ENCODE measurements at regions of chr12 and their contacts with region 1.

Region 1: GRCh38 chr12:75480469-75480949 is at the start of gene GLIPR1:
- DNase-seq: peak; percentile 99
- ATAC-seq: peak; percentile 91
- H3K4me3 ChIP-seq: peak within 1 kb of the TSS; percentile 66
- H3K27ac ChIP-seq: peak within 1 kb of the TSS; percentile 94
- H3K4me1 ChIP-seq: peaks cover 15% of the 10 kb centered on the region
- H3K27me3 ChIP-seq: no peaks in the 10 kb centered on the region
- CTCF ChIP-seq: no peak
- POLR2A ChIP-seq: peak; percentile 98
- RAD21 ChIP-seq: peak; percentile 24; the same call in 1 of the 2 replicates
- total RNA-seq, gene GLIPR1: 244 and 327 TPM in 2 replicates

Region 2: GRCh38 chr12:74537707-74538385 is 942.7 kb before region 1 on chr12 and contains the start of gene ATXN7L3B:
- CTCF ChIA-PET with region 1: no interaction called
- POLR2A ChIA-PET with region 1: no interaction called
- dilution Hi-C with region 1: no loop called
- in situ Hi-C with region 1: no loop called
- intact Hi-C with region 1: loop called (anchors 10 kb)
- DNase-seq: peak; percentile 93
- ATAC-seq: peak; percentile 99
- H3K4me3 ChIP-seq: peak within 1 kb of the TSS; percentile 80
- H3K27ac ChIP-seq: peak within 1 kb of the TSS; percentile 82
- H3K4me1 ChIP-seq: peaks cover 12% of the 10 kb centered on the region
- H3K27me3 ChIP-seq: no peaks in the 10 kb centered on the region
- CTCF ChIP-seq: no peak
- POLR2A ChIP-seq: peak; percentile 92
- RAD21 ChIP-seq: no peak
- total RNA-seq, gene ATXN7L3B: 21.7 and 28.1 TPM in 2 replicates

Region 3: GRCh38 chr12:74801625-74802024 is 678.9 kb before region 1 on chr12:
- CTCF ChIA-PET with region 1: no interaction called
- POLR2A ChIA-PET with region 1: no interaction called
- dilution Hi-C with region 1: no loop called
- in situ Hi-C with region 1: no loop called
- intact Hi-C with region 1: loop called (anchors 5 kb)
- DNase-seq: no peak
- ATAC-seq: no peak
- H3K4me3 ChIP-seq: no peak overlapping the region
- H3K27ac ChIP-seq: no peak overlapping the region
- H3K4me1 ChIP-seq: no peaks in the 10 kb centered on the region
- H3K27me3 ChIP-seq: no peaks in the 10 kb centered on the region
- CTCF ChIP-seq: no peak
- POLR2A ChIP-seq: no peak
- RAD21 ChIP-seq: no peak

Region 4: DNA sequence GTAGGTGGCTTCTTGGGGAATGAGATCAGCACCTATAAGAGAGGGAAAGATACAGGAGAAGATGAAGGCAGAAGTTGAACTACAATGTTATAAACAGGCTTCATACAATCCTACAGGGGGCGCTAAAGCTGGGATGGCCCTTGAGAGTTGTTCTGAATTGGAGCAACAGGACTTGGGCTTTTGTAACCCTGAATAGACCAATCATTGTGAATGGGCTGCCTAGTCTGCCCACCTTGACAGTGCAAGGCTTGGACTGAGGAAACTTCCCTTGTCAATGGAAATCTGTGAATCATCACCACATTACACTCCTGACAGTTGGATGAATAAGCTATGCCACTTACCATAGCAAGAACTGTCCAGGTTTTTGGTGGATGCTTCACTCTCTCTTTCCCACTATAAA is 577.0 kb before region 1 on chr12:
- CTCF ChIA-PET with region 1: no interaction called
- POLR2A ChIA-PET with region 1: no interaction called
- dilution Hi-C with region 1: no loop called
- in situ Hi-C with region 1: no loop called
- intact Hi-C with region 1: no loop called
- DNase-seq: no peak
- ATAC-seq: no peak
- H3K4me3 ChIP-seq: no peak overlapping the region
- H3K27ac ChIP-seq: no peak overlapping the region
- H3K4me1 ChIP-seq: 0 out of 2 replicates have a peak, but pooled peaks cover 2% of the 10 kb centered on the region
- H3K27me3 ChIP-seq: no peaks in the 10 kb centered on the region
- CTCF ChIP-seq: 0 out of 2 replicates have a peak, but pooled peaks have one; percentile 8
- POLR2A ChIP-seq: no peak
- RAD21 ChIP-seq: no peak

Region 5: GRCh38 chr12:75177997-75178396 is 302.5 kb before region 1 on chr12:
- CTCF ChIA-PET with region 1: no interaction called
- POLR2A ChIA-PET with region 1: no interaction called
- dilution Hi-C with region 1: no loop called
- in situ Hi-C with region 1: no loop called
- intact Hi-C with region 1: loop called (anchors 10 kb)
- DNase-seq: peak; percentile 95
- ATAC-seq: peak; percentile 94
- H3K4me3 ChIP-seq: no peak overlapping the region
- H3K27ac ChIP-seq: peak overlapping the region; percentile 37; the same call in 1 of the 2 replicates
- H3K4me1 ChIP-seq: no peaks in the 10 kb centered on the region
- H3K27me3 ChIP-seq: peaks cover 3% of the 10 kb centered on the region
- CTCF ChIP-seq: no peak
- POLR2A ChIP-seq: no peak
- RAD21 ChIP-seq: no peak

Region 6: DNA sequence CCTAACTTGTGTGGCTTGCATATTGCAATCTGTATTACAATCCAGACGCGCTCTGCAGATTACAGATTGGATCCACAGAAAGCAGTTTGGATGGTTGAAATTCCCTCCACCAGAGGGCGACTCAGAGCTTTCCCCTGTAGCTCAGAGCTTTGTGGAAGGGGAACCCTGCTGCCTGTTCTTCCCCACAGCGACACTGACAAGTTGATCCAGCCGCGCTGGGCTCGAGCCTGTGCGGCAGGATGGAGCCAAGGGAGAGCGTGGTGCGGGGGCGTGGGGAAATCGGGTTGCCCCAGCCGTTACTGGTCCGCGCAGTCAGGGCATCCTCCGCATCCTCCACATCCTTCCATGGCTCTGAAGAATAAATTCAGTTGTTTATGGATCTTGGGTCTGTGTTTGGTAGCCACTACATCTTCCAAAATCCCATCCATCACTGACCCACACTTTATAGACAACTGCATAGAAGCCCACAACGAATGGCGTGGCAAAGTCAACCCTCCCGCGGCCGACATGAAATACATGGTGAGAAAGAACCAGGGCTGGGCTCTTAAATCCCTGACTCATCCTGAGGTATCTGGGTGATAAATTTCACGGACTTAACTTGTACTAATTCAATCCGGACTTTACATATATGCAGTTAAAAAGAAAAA is 146.0 kb before region 1 on chr12 and contains the start of gene GLIPR1L1:
- CTCF ChIA-PET with region 1: interaction called, 3 read pairs
- POLR2A ChIA-PET with region 1: no interaction called
- dilution Hi-C with region 1: no loop called
- in situ Hi-C with region 1: loop called (anchors 5 kb)
- intact Hi-C with region 1: loop called (anchors 1 kb)
- DNase-seq: peak; percentile 89
- ATAC-seq: peak; percentile 85
- H3K4me3 ChIP-seq: peak within 1 kb of the TSS; percentile 68
- H3K27ac ChIP-seq: peak within 1 kb of the TSS; percentile 53
- H3K4me1 ChIP-seq: no peaks in the 10 kb centered on the region
- H3K27me3 ChIP-seq: no peaks in the 10 kb centered on the region
- CTCF ChIP-seq: peak; percentile 85
- POLR2A ChIP-seq: no peak
- RAD21 ChIP-seq: peak; percentile 75
- total RNA-seq, gene GLIPR1L1: not detected in 2 replicates

Region 7: DNA sequence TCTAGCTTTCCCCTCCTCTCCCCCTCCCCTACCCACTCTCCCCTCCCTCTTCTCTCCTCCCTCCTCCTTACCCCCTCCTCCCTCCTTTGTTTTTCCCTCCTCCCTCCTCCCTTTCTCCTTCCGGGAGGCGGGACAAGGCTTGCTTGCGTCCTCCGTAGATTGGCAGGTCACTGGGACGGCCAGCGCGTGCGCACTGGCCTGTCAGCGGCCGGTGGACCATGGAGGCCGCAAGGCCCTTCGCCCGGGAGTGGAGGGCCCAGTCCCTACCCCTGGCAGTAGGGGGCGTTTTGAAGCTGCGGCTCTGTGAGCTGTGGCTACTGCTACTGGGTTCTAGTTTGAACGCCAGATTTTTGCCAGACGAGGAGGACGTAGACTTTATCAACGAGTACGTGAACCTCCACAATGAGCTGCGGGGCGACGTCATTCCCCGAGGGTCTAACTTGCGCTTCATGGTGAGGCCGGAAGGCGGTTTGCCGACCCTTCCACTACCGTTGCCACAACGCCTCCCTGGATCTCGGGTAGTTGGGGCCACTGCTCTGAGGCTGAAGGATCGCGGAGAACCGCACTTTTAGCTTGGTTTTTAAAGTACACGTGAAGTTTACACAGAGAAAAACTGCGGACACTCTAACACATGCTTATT is 89.5 kb before region 1 on chr12 and contains the start of gene GLIPR1L2:
- CTCF ChIA-PET with region 1: interaction called, 7 read pairs
- POLR2A ChIA-PET with region 1: interaction called, 3 read pairs
- dilution Hi-C with region 1: no loop called
- in situ Hi-C with region 1: loop called (anchors 10 kb)
- intact Hi-C with region 1: loop called (anchors 1 kb)
- DNase-seq: peak; percentile 97
- ATAC-seq: peak; percentile 99
- H3K4me3 ChIP-seq: peak within 1 kb of the TSS; percentile 51
- H3K27ac ChIP-seq: peak within 1 kb of the TSS; percentile 81
- H3K4me1 ChIP-seq: 0 out of 2 replicates have a peak, but pooled peaks cover 2% of the 10 kb centered on the region
- H3K27me3 ChIP-seq: no peaks in the 10 kb centered on the region
- CTCF ChIP-seq: peak; percentile 91
- POLR2A ChIP-seq: no peak
- RAD21 ChIP-seq: peak; percentile 66
- total RNA-seq, gene GLIPR1L2: not detected in 2 replicates

Region 8: DNA sequence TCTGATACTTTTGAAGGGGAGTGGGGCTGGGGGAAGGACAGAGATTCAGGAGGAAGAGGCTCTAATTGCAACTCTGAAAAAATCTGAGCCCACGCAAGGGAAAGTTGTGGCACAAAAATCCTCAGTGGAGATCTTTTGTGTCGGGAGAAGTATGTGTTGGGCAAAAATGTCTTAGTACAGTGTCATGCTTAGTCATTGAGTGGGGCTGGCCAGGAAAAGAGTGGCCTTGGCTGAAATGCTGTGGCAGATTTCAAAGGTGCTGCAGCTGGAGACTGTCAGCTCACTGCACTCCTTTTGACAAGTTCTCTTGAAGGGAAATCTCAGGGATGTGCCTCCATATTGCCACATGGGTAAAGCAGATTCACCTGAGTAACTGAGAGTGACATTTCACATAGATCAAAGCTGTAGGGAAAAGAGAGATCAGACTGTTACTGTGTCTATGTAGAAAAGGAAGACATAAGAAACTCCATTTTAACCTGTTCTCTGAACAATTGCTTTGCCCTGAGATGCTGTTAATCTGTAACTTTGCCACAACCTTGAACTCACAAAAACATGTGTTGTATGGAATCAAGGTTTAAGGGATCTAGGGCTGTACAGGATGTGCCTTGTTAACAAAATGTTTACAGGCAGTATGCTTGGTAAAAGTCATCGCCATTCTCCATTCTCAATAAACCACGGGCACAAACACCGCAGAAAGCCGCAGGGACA is 35.9 kb before region 1 on chr12:
- CTCF ChIA-PET with region 1: no interaction called
- POLR2A ChIA-PET with region 1: no interaction called
- dilution Hi-C with region 1: no loop called
- in situ Hi-C with region 1: no loop called
- intact Hi-C with region 1: loop called (anchors 2 kb)
- DNase-seq: peak; percentile 73
- ATAC-seq: peak; percentile 71
- H3K4me3 ChIP-seq: no peak overlapping the region
- H3K27ac ChIP-seq: no peak overlapping the region
- H3K4me1 ChIP-seq: peaks cover 3% of the 10 kb centered on the region; the same call in 1 of the 2 replicates
- H3K27me3 ChIP-seq: no peaks in the 10 kb centered on the region
- CTCF ChIP-seq: no peak
- POLR2A ChIP-seq: no peak
- RAD21 ChIP-seq: no peak

Measured in IMR-90 (cell line).